Esophagus muscularis mucosa (tissue), 4 donors: ENCODE measurements at regions of chr20 and their contacts with region 1.

Region 1: GRCh38 chr20:19583532-19584175 is 174.4 kb upstream of the RIN2 start:
- DNase-seq: no peak
- H3K4me3 ChIP-seq: no peak overlapping the region
- H3K27ac ChIP-seq: no peak overlapping the region
- H3K4me1 ChIP-seq: peaks cover 0 to 4% (median 2%) of the 10 kb centered on the region in 4 donors
- H3K27me3 ChIP-seq: no peaks in the 10 kb centered on the region
- CTCF ChIP-seq: peak; percentile 81 to 86 (median 83)
- EP300 ChIP-seq: no peak
- POLR2A ChIP-seq: no peak

Region 2: GRCh38 chr20:19205977-19206396 is 377.7 kb before region 1 on chr20:
- intact Hi-C with region 1: loop called (anchors 2 kb)
- DNase-seq: peak; percentile 96
- H3K4me3 ChIP-seq: no peak overlapping the region
- H3K27ac ChIP-seq: no peak overlapping the region
- H3K4me1 ChIP-seq: peaks cover 0 to 9% (median 6%) of the 10 kb centered on the region in 4 donors
- H3K27me3 ChIP-seq: no peaks in the 10 kb centered on the region
- CTCF ChIP-seq: peak; percentile 85 to 87 (median 86)
- EP300 ChIP-seq: no peak
- POLR2A ChIP-seq: no peak

Region 3: GRCh38 chr20:19308146-19308545 is 275.5 kb before region 1 on chr20:
- intact Hi-C with region 1: no loop called
- DNase-seq: no peak
- H3K4me3 ChIP-seq: no peak overlapping the region
- H3K27ac ChIP-seq: no peak overlapping the region
- H3K4me1 ChIP-seq: no peaks in the 10 kb centered on the region
- H3K27me3 ChIP-seq: no peaks in the 10 kb centered on the region
- CTCF ChIP-seq: no peak
- EP300 ChIP-seq: no peak
- POLR2A ChIP-seq: no peak